ENCODE measurements at regions of chr2 and their contacts with region 1.

Region 1: DNA sequence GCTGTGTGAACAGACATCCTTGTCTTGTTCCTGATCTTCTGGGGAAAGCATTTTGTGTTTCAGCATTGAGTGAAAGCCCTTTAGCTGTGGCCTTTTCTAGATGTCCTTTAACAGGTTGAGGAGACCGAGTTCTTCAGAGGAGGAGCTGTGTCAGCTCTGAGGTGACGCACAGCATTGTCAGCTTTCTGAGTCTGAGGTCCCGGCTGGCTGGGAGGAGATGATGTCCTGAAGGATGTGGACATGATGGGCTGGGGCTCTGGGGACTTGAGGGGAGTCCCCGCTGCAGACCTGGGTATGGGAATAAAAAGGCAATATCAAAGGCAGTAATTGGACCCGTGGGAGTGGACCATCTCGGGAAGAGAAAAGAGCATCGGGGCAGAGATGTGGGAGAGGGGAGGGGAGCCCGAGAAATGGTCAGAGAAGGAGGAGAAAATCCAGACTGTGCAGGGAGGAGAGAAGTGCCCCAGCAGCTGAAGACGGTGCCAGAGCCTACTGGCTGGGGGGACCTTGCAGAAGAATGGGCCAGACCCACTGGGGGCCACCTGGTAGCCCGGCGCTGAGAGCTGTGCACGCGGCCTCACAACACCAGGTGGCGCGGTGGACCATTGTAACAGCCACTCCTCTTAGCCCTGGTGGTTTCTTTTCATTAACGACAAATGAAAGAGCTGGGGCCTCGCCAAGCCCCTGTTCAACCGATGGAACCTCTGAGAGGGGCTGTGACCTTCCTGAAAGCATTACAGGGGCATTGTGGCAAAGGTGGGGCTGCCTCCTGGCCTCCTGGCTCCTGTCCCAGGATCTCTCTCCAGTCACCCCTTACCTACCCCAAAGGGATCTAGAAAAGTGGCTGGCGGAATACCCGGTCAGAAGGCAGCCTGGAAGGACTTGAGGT is 61.6 kb downstream of the ST3GAL5 start:
- DNase-seq: peak; percentile 84
- H3K4me3 ChIP-seq: peak overlapping the region; percentile 15 to 49; a peak in 2 of 4 replicates
- H3K27ac ChIP-seq: no peak overlapping the region
- H3K4me1 ChIP-seq: peaks cover 0 to 7% of the 10 kb centered on the region in 2 experiments; a peak in 1 of 4 replicates
- H3K27me3 ChIP-seq: no peaks in the 10 kb centered on the region
- CTCF ChIP-seq: peak; percentile 87
- EP300 ChIP-seq: no peak
- RAD21 ChIP-seq: peak; percentile 92

Region 2: GRCh38 chr2:84704505-84705244 is 1122.6 kb before region 1 on chr2:
- CTCF ChIA-PET with region 1: no interaction called
- POLR2A ChIA-PET with region 1: no interaction called
- DNase-seq: no peak
- H3K4me3 ChIP-seq: no peak overlapping the region
- H3K27ac ChIP-seq: no peak overlapping the region
- H3K4me1 ChIP-seq: no peaks in the 10 kb centered on the region
- H3K27me3 ChIP-seq: no peaks in the 10 kb centered on the region
- CTCF ChIP-seq: no peak
- EP300 ChIP-seq: no peak
- RAD21 ChIP-seq: no peak

Region 3: DNA sequence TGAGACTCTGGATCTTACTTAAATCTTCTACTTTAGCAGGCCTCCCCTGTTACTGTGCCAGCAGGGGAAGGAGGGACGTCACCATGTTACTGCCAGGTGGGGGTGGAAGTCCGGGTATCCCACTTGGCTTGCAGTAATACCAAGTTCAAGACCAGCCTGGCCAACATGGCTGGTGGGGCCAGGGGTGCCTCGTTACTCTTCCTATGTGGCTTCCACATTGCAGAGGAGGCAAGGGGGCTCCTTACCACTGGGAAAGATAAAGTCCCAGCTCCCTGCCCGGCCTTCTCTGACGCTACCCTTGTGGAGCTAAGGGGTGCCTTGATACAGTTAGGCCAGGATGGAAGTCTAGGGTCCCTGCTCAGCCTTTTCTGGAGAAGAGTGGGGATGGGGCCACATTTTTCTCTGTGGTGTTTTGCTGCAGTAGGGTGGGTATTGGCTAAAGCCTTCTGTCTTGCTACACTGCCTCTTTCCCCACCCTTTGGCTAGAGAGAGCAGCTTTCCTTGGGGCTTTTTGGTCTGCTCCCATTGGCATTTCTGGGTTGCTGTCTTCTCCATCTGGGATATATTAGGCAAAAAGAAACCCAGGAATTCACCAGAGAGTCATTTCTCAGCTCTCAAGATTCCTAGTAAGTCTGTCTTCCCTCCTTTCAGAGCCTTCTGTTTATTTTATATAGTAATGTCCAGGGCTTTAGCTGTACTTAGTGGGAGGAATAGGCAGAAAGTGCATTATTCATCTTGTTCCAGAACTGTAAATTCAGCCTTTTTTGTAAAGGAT is 450.8 kb before region 1 on chr2:
- CTCF ChIA-PET with region 1: no interaction called
- POLR2A ChIA-PET with region 1: no interaction called
- DNase-seq: no peak
- H3K4me3 ChIP-seq: no peak overlapping the region
- H3K27ac ChIP-seq: no peak overlapping the region
- H3K4me1 ChIP-seq: no peaks in the 10 kb centered on the region
- H3K27me3 ChIP-seq: no peaks in the 10 kb centered on the region
- CTCF ChIP-seq: no peak
- EP300 ChIP-seq: no peak
- RAD21 ChIP-seq: no peak

Region 4: DNA sequence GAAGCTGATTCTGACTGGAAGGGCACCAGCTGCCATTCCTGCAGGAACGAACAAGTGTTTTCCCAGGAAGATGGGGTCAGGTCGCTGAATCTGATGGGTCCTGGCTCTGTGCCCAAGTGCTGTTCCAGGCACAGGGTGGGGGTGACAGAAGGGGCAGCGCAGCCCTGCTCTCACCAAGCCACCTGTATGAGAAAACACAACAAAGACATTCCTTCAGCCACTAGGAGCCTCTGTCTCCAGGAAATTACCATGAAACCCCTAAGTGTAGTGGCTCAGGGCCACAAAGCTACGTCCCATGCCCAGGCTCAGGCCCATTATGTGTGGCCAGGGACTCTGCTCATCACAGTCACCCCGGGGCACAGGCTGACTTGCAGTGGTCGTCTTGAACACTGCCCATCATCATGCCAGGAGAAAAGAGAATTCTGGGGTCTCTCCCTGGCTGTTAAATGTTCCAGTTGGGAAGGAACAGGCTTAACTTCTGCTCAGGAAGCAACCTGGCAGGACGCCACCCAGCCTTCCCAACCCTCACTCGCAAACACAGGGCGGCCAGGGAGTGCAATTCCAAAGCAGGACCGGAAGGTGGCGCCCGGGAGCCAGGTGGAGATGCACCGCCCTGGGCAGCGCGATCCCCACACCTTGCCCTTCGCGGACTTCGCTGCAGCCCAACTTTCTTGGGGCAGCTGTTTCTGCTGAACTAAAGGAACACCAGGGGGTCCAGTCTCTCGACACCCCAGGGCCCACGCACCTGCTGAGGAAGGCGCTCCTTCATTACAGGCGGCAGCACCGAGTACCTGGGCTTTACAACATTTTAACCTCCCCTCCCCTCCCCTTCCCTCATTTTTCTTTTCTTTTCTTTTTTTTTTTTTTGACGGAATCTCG is 148.2 kb before region 1 on chr2:
- CTCF ChIA-PET with region 1: interaction called, 11 read pairs
- POLR2A ChIA-PET with region 1: no interaction called
- DNase-seq: peak; percentile 92
- H3K4me3 ChIP-seq: no peak overlapping the region
- H3K27ac ChIP-seq: no peak overlapping the region
- H3K4me1 ChIP-seq: peaks cover 0 to 7% of the 10 kb centered on the region in 2 experiments; a peak in 1 of 4 replicates
- H3K27me3 ChIP-seq: no peaks in the 10 kb centered on the region
- CTCF ChIP-seq: peak; percentile 93
- EP300 ChIP-seq: no peak
- RAD21 ChIP-seq: peak; percentile 82

Region 5: GRCh38 chr2:85702172-85702571 is 125.1 kb before region 1 on chr2:
- CTCF ChIA-PET with region 1: no interaction called
- POLR2A ChIA-PET with region 1: no interaction called
- DNase-seq: no peak
- H3K4me3 ChIP-seq: no peak overlapping the region
- H3K27ac ChIP-seq: peak overlapping the region in 1 of 2 experiments; percentile 56; a peak in 2 of 4 replicates
- H3K4me1 ChIP-seq: peaks cover 0 to 11% of the 10 kb centered on the region in 2 experiments; a peak in 2 of 4 replicates
- H3K27me3 ChIP-seq: no peaks in the 10 kb centered on the region
- CTCF ChIP-seq: no peak
- EP300 ChIP-seq: peak in 1 of 2 experiments; percentile 57; a peak in 1 of 4 replicates
- RAD21 ChIP-seq: no peak

Region 6: GRCh38 chr2:85728883-85729824 is 98.1 kb before region 1 on chr2:
- CTCF ChIA-PET with region 1: interaction called, 21 read pairs
- POLR2A ChIA-PET with region 1: no interaction called
- DNase-seq: peak; percentile 90
- H3K4me3 ChIP-seq: peak overlapping the region in 1 of 2 experiments; percentile 47; a peak in 1 of 4 replicates
- H3K27ac ChIP-seq: no peak overlapping the region
- H3K4me1 ChIP-seq: peaks cover 0 to 11% of the 10 kb centered on the region in 2 experiments; a peak in 1 of 4 replicates
- H3K27me3 ChIP-seq: no peaks in the 10 kb centered on the region
- CTCF ChIP-seq: peak; percentile 97
- EP300 ChIP-seq: no peak
- RAD21 ChIP-seq: peak; percentile 99

Region 7: GRCh38 chr2:85813982-85814801 is 13.0 kb before region 1 on chr2:
- CTCF ChIA-PET with region 1: interaction called, 57 read pairs
- POLR2A ChIA-PET with region 1: no interaction called
- DNase-seq: peak; percentile 92
- H3K4me3 ChIP-seq: no peak overlapping the region
- H3K27ac ChIP-seq: no peak overlapping the region
- H3K4me1 ChIP-seq: peaks cover 0 to 17% of the 10 kb centered on the region in 2 experiments; a peak in 1 of 4 replicates
- H3K27me3 ChIP-seq: no peaks in the 10 kb centered on the region
- CTCF ChIP-seq: peak; percentile 94
- EP300 ChIP-seq: no peak
- RAD21 ChIP-seq: peak; percentile 100

Region 8: DNA sequence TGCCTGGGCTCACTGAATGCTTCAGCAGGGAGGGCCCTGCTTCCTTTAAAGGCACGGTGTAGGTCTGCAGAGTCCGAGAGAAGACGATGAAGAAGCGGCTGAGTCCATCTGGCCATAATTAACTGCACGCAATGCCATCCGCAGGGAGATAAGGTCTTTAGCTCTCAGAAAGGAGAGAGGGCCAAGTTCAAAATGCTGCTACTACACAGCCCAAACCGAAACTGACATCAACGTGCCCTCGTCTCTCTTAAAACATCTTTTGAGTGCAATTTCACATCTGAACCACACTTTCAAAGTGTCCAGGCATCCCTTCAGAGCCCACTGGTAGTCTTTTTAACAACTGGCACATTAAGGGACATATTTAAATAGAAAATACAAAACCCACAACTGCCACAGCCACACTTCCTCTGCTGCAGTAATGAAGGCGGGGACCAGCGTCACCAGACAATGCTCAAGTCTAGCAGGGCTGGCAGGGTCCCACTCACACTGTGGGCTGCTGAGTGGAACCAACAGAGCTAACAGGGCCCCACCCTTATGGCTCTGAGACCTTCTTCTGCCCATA is 25.8 kb after region 1 on chr2:
- CTCF ChIA-PET with region 1: interaction called, 34 read pairs
- POLR2A ChIA-PET with region 1: no interaction called
- DNase-seq: peak; percentile 50
- H3K4me3 ChIP-seq: no peak overlapping the region
- H3K27ac ChIP-seq: peak overlapping the region in 1 of 2 experiments; percentile 45; a peak in 2 of 4 replicates
- H3K4me1 ChIP-seq: peaks cover 0 to 26% of the 10 kb centered on the region in 2 experiments; a peak in 2 of 4 replicates
- H3K27me3 ChIP-seq: no peaks in the 10 kb centered on the region
- CTCF ChIP-seq: no peak
- EP300 ChIP-seq: no peak
- RAD21 ChIP-seq: no peak

Region 9: DNA sequence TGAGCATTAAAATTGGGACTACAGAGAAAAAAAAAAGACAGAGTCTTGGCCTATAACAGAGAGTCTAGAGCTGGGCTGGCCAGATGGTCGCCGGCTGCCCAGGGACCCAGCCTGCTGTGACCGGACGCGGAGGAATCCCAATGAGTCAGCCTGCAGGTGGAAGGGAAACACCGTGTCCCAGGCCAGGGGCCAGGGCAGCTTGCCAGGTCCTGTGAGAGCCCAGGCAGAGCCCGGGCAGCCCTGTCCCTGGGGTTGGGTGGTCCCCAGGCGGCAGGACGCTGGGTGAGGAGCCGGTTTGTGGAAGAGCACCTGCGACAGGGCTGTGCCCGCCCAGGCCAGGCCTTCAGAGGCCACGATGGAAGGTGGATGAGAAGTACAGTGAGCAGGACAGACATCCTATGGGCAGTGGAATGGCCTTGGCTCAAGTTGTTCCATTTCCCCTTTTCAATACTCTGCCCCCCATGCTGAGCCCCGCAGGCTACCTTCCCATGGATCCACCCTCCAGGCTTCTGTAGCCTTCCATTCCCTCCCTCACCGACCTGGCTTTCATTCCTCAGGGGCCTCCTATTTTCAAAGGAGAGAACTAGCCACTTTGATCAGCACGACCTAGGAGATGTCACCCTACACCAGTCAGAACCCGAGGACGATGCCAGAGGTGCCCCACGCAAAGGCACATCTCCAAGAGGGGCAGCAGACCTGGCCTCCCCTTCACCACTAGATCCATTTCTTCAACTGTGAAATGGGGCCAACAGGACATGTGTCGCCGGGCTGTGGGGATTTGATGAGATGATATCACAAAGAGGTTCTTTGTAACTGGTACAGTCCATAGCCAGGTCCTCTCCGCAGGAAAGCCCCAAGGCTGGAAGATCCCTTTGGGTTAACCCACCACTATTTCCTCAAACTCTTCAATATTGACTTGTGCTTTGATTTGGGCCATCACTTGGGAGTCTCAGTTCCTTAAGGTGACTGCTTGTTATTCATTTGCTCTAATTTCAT is 191.0 kb after region 1 on chr2:
- CTCF ChIA-PET with region 1: interaction called, 15 read pairs
- POLR2A ChIA-PET with region 1: interaction called, 6 read pairs
- DNase-seq: no peak
- H3K4me3 ChIP-seq: no peak overlapping the region
- H3K27ac ChIP-seq: no peak overlapping the region
- H3K4me1 ChIP-seq: no peaks in the 10 kb centered on the region; a peak in 1 of 4 replicates
- H3K27me3 ChIP-seq: no peaks in the 10 kb centered on the region
- CTCF ChIP-seq: no peak
- EP300 ChIP-seq: no peak
- RAD21 ChIP-seq: no peak

Region 10: GRCh38 chr2:86072271-86072858 is 245.1 kb after region 1 on chr2:
- CTCF ChIA-PET with region 1: interaction called, 223 read pairs
- POLR2A ChIA-PET with region 1: no interaction called
- DNase-seq: peak; percentile 41
- H3K4me3 ChIP-seq: no peak overlapping the region
- H3K27ac ChIP-seq: peak overlapping the region in 1 of 2 experiments; percentile 34; a peak in 1 of 4 replicates
- H3K4me1 ChIP-seq: peaks cover 0 to 17% of the 10 kb centered on the region in 2 experiments; a peak in 2 of 4 replicates
- H3K27me3 ChIP-seq: no peaks in the 10 kb centered on the region
- CTCF ChIP-seq: no peak
- EP300 ChIP-seq: no peak
- RAD21 ChIP-seq: no peak

Region 11: GRCh38 chr2:86297382-86298147 is 470.3 kb after region 1 on chr2:
- CTCF ChIA-PET with region 1: no interaction called
- POLR2A ChIA-PET with region 1: no interaction called
- DNase-seq: no peak
- H3K4me3 ChIP-seq: no peak overlapping the region
- H3K27ac ChIP-seq: no peak overlapping the region
- H3K4me1 ChIP-seq: peaks cover 0 to 7% of the 10 kb centered on the region in 2 experiments; a peak in 2 of 4 replicates
- H3K27me3 ChIP-seq: no peaks in the 10 kb centered on the region
- CTCF ChIP-seq: peak; percentile 9; the same call in 1 of the 2 replicates
- EP300 ChIP-seq: no peak
- RAD21 ChIP-seq: peak; percentile 40